ENCODE measurements at regions of chr12 and their contacts with region 1.

Region 1: GRCh38 chr12:70517256-70517655 is 120.0 kb downstream of the PTPRB start:
- DNase-seq: no peak
- H3K4me3 ChIP-seq: no peak overlapping the region
- H3K27ac ChIP-seq: no peak overlapping the region
- H3K4me1 ChIP-seq: peaks cover 7% of the 10 kb centered on the region
- H3K27me3 ChIP-seq: no peaks in the 10 kb centered on the region
- CTCF ChIP-seq: no peak
- POLR2A ChIP-seq: peak; percentile 43

Region 2: GRCh38 chr12:69985656-69986055 is 531.6 kb before region 1 on chr12:
- CTCF ChIA-PET with region 1: no interaction called
- POLR2A ChIA-PET with region 1: no interaction called
- dilution Hi-C with region 1: no loop called
- intact Hi-C with region 1: loop called (anchors 10 kb)
- DNase-seq: no peak
- H3K4me3 ChIP-seq: no peak overlapping the region
- H3K27ac ChIP-seq: no peak overlapping the region
- H3K4me1 ChIP-seq: peaks cover 20% of the 10 kb centered on the region
- H3K27me3 ChIP-seq: peaks cover 0 to 2% of the 10 kb centered on the region in 2 experiments
- CTCF ChIP-seq: peak; percentile 18 to 29
- POLR2A ChIP-seq: no peak

Region 3: GRCh38 chr12:70645494-70646317 is 128.4 kb after region 1 on chr12:
- CTCF ChIA-PET with region 1: no interaction called
- POLR2A ChIA-PET with region 1: no interaction called
- dilution Hi-C with region 1: no loop called
- intact Hi-C with region 1: no loop called
- DNase-seq: peak; percentile 95
- H3K4me3 ChIP-seq: no peak overlapping the region
- H3K27ac ChIP-seq: peak overlapping the region; percentile 99
- H3K4me1 ChIP-seq: peaks cover 54% of the 10 kb centered on the region
- H3K27me3 ChIP-seq: no peaks in the 10 kb centered on the region
- CTCF ChIP-seq: no peak
- POLR2A ChIP-seq: peak; percentile 70

Measured in endothelial cell of umbilical vein (primary cell).